Heart right ventricle (tissue), 16 donors: ENCODE measurements at regions of chr5 and their contacts with region 1.

Region 1: GRCh38 chr5:141223112-141223783 is at the start of gene PCDHB14:
- DNase-seq: no peak
- ATAC-seq: peak in 1 of 8 donors; percentile 65
- H3K4me3 ChIP-seq: peak within 1 kb of the TSS in 7 of 10 donors; percentile 12 to 40 (median 29)
- H3K27ac ChIP-seq: no peak within 1 kb of the TSS
- H3K4me1 ChIP-seq: no peaks in the 10 kb centered on the region
- H3K27me3 ChIP-seq: peaks cover 0 to 13% (median 0%) of the 10 kb centered on the region in 7 donors
- CTCF ChIP-seq: peak in 6 of 9 donors; percentile 15 to 43 (median 26)
- total RNA-seq, gene PCDHB14: 1.4 to 9.0 (median 4.2) TPM

Region 2: GRCh38 chr5:141022384-141022783 is 200.9 kb before region 1 on chr5:
- intact Hi-C with region 1: no loop called
- DNase-seq: no peak
- ATAC-seq: no peak
- H3K4me3 ChIP-seq: no peak overlapping the region
- H3K27ac ChIP-seq: no peak overlapping the region
- H3K4me1 ChIP-seq: no peaks in the 10 kb centered on the region
- H3K27me3 ChIP-seq: no peaks in the 10 kb centered on the region
- CTCF ChIP-seq: no peak

Region 3: DNA sequence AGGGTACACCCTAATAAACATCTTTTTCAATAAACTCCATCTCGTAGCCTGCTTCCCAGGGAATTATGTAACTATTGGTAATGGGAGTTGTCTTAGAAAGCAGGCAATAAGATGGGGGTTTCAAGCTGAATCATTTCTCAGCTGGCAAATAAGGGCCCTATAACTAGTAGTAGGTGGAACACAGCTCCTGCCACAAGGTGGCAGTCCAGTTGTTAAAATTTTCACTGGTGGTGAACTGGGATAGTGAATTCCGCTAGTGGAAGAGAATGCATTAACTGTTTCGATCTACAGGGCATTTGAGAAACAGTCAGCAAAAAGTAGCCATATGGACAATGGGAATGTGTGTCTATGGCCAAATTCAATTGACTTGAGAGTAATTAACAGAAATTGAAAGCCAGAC is 49.7 kb after region 1 on chr5:
- intact Hi-C with region 1: no loop called
- DNase-seq: no peak
- ATAC-seq: no peak
- H3K4me3 ChIP-seq: no peak overlapping the region
- H3K27ac ChIP-seq: no peak overlapping the region
- H3K4me1 ChIP-seq: no peaks in the 10 kb centered on the region
- H3K27me3 ChIP-seq: no peaks in the 10 kb centered on the region
- CTCF ChIP-seq: no peak

Region 4: DNA sequence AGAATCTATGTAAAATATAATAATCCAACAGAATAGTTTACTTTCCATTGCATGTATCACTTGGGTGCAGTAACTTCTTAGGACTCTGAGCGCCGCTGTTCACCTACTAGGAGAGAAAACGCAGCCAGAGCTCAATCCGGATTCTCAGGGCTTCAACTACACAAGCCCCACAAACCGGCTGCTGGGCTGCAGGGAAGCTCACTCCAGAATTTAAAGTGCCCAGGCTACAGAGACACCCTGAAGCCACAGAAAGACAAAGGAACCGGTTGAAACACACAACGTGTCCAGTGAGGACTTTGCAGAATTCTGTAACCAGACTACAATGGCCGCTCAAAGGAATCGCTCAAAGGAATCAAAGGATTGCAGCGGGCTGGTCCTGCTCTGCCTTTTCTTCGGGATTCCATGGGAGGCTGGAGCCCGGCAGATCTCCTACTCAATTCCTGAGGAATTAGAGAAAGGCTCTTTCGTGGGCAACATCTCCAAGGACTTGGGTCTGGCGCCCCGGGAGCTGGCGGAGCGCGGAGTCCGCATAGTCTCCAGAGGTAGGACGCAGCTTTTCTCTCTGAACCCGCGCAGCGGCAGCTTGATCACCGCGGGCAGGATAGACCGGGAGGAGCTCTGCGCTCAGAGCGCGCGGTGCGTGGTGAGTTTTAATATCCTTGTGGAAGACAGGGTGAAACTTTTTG is 189.7 kb after region 1 on chr5 and contains the start of gene PCDHGA10:
- intact Hi-C with region 1: loop called in 1 of 10 experiments (anchors 10 kb)
- DNase-seq: no peak
- ATAC-seq: peak in 6 of 8 donors; percentile 55 to 65 (median 60)
- H3K4me3 ChIP-seq: peak within 1 kb of the TSS in 9 of 10 donors; percentile 5 to 48 (median 34)
- H3K27ac ChIP-seq: peak within 1 kb of the TSS in 4 of 10 donors; percentile 1 to 24 (median 8)
- H3K4me1 ChIP-seq: peaks cover 0 to 19% (median 0%) of the 10 kb centered on the region in 9 donors
- H3K27me3 ChIP-seq: peaks cover 0 to 96% (median 0%) of the 10 kb centered on the region in 7 donors
- CTCF ChIP-seq: peak; percentile 18 to 59 (median 52)
- total RNA-seq, gene PCDHGA10: 4.3 to 7.8 (median 6.7) TPM